CD4-positive, alpha-beta memory T cell (primary cell): ENCODE measurements at regions of chr6 and their contacts with region 1.

Region 1: DNA sequence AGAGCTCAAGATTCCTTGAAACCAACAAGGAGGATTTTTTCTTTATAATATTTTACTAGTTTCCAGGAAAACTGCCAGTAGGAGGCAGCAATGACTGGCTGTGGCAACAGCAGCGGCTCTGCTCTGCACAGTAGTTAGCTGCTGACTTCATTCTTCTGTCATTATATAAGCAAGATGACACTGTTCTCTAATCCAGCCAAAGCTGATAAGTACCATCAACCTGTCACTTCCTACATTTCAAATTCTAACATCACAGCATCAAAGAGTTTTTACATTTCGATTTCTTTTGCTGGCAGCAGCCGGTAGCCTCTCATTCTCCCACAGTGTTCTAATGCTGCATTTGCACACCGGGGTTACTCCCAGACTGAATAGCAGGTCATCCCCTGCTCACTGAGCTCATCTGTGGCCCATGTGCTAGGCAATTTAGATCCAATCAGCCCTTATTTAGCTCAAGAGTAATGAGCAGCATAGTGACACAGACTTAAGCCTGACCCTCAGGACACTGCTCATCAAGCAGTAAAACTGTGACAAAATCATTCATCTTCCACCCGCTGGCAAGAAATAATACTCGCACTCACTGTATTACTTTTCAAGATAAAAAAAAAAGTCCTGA is 67.8 kb downstream of the MMS22L start:
- DNase-seq: no peak
- H3K4me3 ChIP-seq: no peak overlapping the region
- H3K4me3 Mint-ChIP-seq: no peak overlapping the region
- H3K27ac ChIP-seq: no peak overlapping the region
- H3K27ac Mint-ChIP-seq: no peak overlapping the region
- H3K4me1 ChIP-seq: no peaks in the 10 kb centered on the region
- H3K4me1 Mint-ChIP-seq: peaks cover 0 to 5% (median 0%) of the 10 kb centered on the region in 4 donors
- H3K27me3 ChIP-seq: no peaks in the 10 kb centered on the region
- H3K27me3 Mint-ChIP-seq: no peaks in the 10 kb centered on the region

Region 2: GRCh38 chr6:97150932-97151331 is 64.3 kb before region 1 on chr6:
- CTCF ChIA-PET with region 1: no interaction called
- POLR2A ChIA-PET with region 1: no interaction called
- intact Hi-C with region 1: no loop called
- DNase-seq: no peak
- H3K4me3 ChIP-seq: no peak overlapping the region
- H3K4me3 Mint-ChIP-seq: no peak overlapping the region
- H3K27ac ChIP-seq: no peak overlapping the region
- H3K27ac Mint-ChIP-seq: no peak overlapping the region
- H3K4me1 ChIP-seq: no peaks in the 10 kb centered on the region
- H3K4me1 Mint-ChIP-seq: no peaks in the 10 kb centered on the region
- H3K27me3 ChIP-seq: no peaks in the 10 kb centered on the region
- H3K27me3 Mint-ChIP-seq: no peaks in the 10 kb centered on the region

Region 3: GRCh38 chr6:97186416-97186999 is 28.8 kb before region 1 on chr6:
- CTCF ChIA-PET with region 1: interaction called, 19 read pairs
- POLR2A ChIA-PET with region 1: no interaction called
- intact Hi-C with region 1: no loop called
- DNase-seq: peak; percentile 42 to 59 (median 55)
- H3K4me3 ChIP-seq: no peak overlapping the region
- H3K4me3 Mint-ChIP-seq: no peak overlapping the region
- H3K27ac ChIP-seq: no peak overlapping the region
- H3K27ac Mint-ChIP-seq: no peak overlapping the region
- H3K4me1 ChIP-seq: no peaks in the 10 kb centered on the region
- H3K4me1 Mint-ChIP-seq: peaks cover 0 to 2% (median under 1%) of the 10 kb centered on the region in 4 donors
- H3K27me3 ChIP-seq: no peaks in the 10 kb centered on the region
- H3K27me3 Mint-ChIP-seq: no peaks in the 10 kb centered on the region

Region 4: DNA sequence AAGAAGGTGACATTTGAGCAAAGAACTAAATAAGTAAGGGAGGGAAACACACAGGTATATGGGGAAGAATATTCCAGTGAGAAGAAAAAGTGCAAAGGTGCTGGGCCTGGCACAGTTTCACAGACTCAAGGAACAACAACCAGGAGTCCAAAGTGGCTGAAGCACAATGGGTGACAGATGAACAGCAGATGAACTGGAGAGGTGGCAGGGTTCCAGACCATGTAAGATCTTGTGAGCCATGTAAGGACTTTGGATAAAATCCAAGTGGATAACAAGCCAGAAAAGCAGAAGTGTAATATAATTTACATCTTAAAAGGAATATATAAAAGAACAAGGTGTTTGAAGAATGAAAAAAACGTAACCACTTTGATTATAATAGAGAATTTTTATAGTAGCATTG is 20.1 kb before region 1 on chr6:
- CTCF ChIA-PET with region 1: interaction called, 10 read pairs
- POLR2A ChIA-PET with region 1: no interaction called
- intact Hi-C with region 1: no loop called
- DNase-seq: no peak
- H3K4me3 ChIP-seq: no peak overlapping the region
- H3K4me3 Mint-ChIP-seq: no peak overlapping the region
- H3K27ac ChIP-seq: no peak overlapping the region
- H3K27ac Mint-ChIP-seq: no peak overlapping the region
- H3K4me1 ChIP-seq: no peaks in the 10 kb centered on the region
- H3K4me1 Mint-ChIP-seq: peaks cover 0 to 2% (median under 1%) of the 10 kb centered on the region in 4 donors
- H3K27me3 ChIP-seq: no peaks in the 10 kb centered on the region
- H3K27me3 Mint-ChIP-seq: no peaks in the 10 kb centered on the region

Region 5: DNA sequence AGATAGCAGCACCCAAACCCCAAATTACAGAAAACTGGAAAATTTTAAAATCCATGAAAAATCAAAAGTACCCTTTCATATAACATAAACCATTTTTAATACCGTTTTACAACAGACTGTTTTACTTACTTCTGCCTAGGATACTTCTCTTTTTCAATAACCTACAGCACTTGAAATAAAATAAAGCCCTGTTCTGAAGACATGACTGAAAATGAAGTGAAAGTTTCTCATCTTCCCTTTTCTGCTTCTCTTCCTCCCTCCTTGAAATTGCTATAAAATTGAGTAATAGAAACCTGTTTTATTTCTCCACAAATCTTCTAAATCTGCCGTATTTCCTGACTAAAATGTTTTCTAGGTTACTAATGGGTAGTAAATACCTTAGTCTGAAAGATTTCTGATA is 47.4 kb after region 1 on chr6:
- CTCF ChIA-PET with region 1: no interaction called
- POLR2A ChIA-PET with region 1: no interaction called
- intact Hi-C with region 1: no loop called
- DNase-seq: no peak
- H3K4me3 ChIP-seq: no peak overlapping the region
- H3K4me3 Mint-ChIP-seq: no peak overlapping the region
- H3K27ac ChIP-seq: no peak overlapping the region
- H3K27ac Mint-ChIP-seq: no peak overlapping the region
- H3K4me1 ChIP-seq: no peaks in the 10 kb centered on the region
- H3K4me1 Mint-ChIP-seq: no peaks in the 10 kb centered on the region
- H3K27me3 ChIP-seq: no peaks in the 10 kb centered on the region
- H3K27me3 Mint-ChIP-seq: no peaks in the 10 kb centered on the region